Panc1 (cell line): ENCODE measurements at regions of chr16 and their contacts with region 1.

Region 1: DNA sequence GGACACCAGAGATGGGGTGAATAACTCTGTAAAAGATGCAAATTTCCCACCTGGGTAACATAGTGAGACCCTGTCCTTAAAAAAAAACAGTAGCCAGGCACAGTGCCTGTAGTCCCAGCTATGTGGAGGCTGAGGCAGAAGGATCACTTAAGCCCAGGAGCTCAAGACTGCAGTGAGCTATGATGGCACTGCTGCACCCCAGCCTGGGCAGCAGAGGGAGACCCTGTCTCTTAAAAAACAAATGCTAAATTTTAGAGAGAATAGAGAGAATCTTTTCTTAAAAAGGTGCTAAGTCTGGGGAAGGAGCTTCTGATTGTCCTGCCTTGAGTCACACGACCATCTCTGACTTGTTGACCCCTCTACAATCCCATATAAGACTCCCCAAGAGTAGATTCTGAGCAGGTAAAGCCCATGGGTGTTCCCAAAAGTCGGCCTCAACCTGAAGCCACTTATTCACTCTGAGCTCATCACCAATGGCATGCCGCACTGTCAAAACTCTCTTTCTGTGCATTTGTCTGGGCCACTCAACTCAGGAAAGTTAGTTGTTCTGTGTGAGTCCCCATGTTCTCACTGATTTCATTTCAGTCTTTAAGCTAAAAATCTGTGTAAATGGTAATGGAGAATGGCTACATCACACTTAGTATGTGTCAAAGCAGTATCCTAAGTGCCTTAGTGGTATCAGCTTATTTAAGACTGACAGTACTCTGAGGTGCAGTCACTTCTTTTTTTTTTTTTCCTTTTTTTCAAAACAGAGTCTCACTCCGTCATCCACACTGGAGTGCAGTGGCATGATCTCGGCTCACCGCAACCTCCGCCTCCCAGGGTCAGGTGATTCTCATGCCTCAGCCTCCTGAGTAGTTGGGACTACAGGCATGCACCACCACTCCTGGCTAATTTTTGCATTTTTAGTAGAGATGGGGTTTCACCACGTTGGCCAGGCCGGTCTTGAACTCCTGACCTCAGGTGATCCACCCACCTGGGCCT is 41.6 kb downstream of the PRKCB start:
- DNase-seq: no peak
- ATAC-seq: no peak
- H3K4me3 ChIP-seq: no peak overlapping the region
- H3K27ac ChIP-seq: no peak overlapping the region
- H3K4me1 ChIP-seq: no peaks in the 10 kb centered on the region
- H3K27me3 ChIP-seq: no peaks in the 10 kb centered on the region
- CTCF ChIP-seq: peak; percentile 38; the same call in 1 of the 2 replicates

Region 2: DNA sequence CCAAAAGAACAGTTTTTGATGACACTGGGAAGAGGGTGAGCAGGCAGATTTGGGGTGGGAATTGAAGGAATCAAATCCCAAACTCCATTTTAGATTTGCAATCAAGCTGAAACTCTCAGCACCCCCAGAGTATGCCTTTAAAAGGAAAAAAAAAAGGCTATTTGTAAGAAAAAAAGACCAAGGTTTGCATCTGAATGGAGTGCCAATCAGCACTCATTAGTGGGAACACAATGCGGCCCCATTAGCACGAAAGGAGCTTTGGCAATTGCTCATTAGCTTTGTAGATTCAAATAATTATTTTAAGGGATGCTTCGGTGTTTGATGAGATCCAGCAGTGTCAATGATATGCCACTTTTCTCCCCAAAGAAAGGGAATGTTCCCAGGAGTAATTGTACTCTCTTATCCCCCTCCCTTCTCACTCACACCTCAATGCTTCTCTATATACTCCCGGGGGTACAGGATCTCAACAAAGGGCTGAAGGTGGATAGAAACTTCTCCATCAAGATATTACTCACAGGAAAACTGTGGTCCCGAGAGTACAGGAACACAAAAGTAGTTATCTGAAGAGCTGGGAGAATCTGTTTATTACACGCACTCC is 90.3 kb before region 1 on chr16:
- CTCF ChIA-PET with region 1: no interaction called
- POLR2A ChIA-PET with region 1: interaction called, 13 read pairs
- in situ Hi-C with region 1: no loop called
- intact Hi-C with region 1: no loop called
- DNase-seq: no peak
- ATAC-seq: no peak
- H3K4me3 ChIP-seq: no peak overlapping the region
- H3K27ac ChIP-seq: no peak overlapping the region
- H3K4me1 ChIP-seq: no peaks in the 10 kb centered on the region
- H3K27me3 ChIP-seq: no peaks in the 10 kb centered on the region
- CTCF ChIP-seq: no peak

Region 3: DNA sequence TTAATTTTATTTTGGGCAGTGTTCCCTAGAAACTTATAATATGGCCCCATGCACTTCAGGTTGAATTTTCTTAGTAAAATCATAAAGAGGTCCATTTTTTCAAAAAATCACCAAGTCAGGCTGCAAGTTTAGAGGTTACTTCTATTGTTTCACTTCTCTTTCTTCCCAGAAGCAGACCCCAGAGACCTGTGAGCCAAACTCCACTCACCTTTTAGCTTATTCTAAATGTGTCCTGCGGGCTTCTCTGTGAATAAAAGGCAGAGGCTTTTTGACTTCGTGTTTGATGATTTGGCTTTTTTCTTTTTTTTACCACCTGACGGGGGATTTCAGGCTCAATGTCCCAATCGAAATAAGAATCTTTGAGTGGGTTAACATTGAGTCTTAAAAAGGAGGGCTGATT is 34.3 kb before region 1 on chr16:
- CTCF ChIA-PET with region 1: interaction called, 10 read pairs
- POLR2A ChIA-PET with region 1: no interaction called
- in situ Hi-C with region 1: no loop called
- intact Hi-C with region 1: no loop called
- DNase-seq: no peak
- ATAC-seq: no peak
- H3K4me3 ChIP-seq: no peak overlapping the region
- H3K27ac ChIP-seq: no peak overlapping the region
- H3K4me1 ChIP-seq: no peaks in the 10 kb centered on the region
- H3K27me3 ChIP-seq: peaks cover 12% of the 10 kb centered on the region
- CTCF ChIP-seq: no peak